Mammary epithelial cell (primary cell): ENCODE measurements at regions of chr10 and their contacts with region 1.

Region 1: GRCh38 chr10:47133871-47134570 is 166.0 kb upstream of the GDF10 start:
- DNase-seq: no peak
- H3K4me3 ChIP-seq: no peak overlapping the region
- H3K27ac ChIP-seq: no peak overlapping the region
- H3K4me1 ChIP-seq: peaks cover 16% of the 10 kb centered on the region
- H3K27me3 ChIP-seq: no peaks in the 10 kb centered on the region
- CTCF ChIP-seq: no peak

Region 2: GRCh38 chr10:47092822-47093221 is 41.2 kb before region 1 on chr10:
- CTCF ChIA-PET with region 1: no interaction called
- dilution Hi-C with region 1: loop called (anchors 5 kb)
- in situ Hi-C with region 1: no loop called
- intact Hi-C with region 1: no loop called
- DNase-seq: no peak
- H3K4me3 ChIP-seq: no peak overlapping the region
- H3K27ac ChIP-seq: no peak overlapping the region
- H3K4me1 ChIP-seq: no peaks in the 10 kb centered on the region
- H3K27me3 ChIP-seq: peaks cover 2% of the 10 kb centered on the region
- CTCF ChIP-seq: no peak

Region 3: DNA sequence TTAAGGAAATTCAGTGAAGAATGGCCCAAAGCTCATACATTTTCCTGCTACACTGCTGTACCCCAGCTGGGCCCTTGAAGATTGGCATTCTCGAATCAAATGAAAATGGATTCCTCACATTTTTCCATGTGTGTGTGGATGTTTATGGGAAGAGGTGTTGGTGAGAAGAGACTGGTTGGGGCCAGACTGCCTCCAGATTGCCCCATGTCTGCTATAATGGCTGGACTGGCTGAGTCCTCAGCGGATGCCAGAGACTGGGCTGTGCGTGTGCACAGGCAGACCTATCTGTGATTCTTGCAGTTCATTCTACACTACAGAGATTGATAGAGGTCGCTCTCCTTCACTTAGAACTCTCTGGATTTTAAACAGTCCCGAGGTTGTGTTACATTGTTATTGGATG is 17.6 kb before region 1 on chr10:
- CTCF ChIA-PET with region 1: no interaction called
- dilution Hi-C with region 1: no loop called
- in situ Hi-C with region 1: no loop called
- intact Hi-C with region 1: no loop called
- DNase-seq: no peak
- H3K4me3 ChIP-seq: no peak overlapping the region
- H3K27ac ChIP-seq: no peak overlapping the region
- H3K4me1 ChIP-seq: no peaks in the 10 kb centered on the region
- H3K27me3 ChIP-seq: peaks cover 4% of the 10 kb centered on the region
- CTCF ChIP-seq: no peak

Region 4: DNA sequence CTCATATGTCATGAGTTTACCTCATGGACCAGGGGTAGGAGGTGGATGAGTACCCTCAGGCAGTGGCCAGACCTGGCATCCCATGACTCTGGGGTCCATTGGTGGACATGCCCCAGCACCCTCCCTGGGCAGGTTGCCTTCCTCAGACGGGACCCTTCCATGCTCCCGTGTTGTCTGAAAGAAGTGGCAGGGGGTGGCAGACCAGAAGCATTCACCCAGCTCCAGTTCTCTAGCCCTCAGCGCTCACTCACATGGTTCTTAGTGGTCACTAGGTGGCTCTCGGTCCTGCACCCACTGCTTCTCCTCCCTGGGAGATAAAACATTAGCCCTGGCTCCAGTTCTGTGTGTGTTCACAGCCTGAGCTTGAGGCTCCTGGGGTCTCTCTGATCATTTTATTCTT is 220.1 kb after region 1 on chr10:
- CTCF ChIA-PET with region 1: no interaction called
- dilution Hi-C with region 1: no loop called
- in situ Hi-C with region 1: no loop called
- intact Hi-C with region 1: no loop called
- DNase-seq: no peak
- H3K4me3 ChIP-seq: no peak overlapping the region
- H3K27ac ChIP-seq: no peak overlapping the region
- H3K4me1 ChIP-seq: no peaks in the 10 kb centered on the region
- H3K27me3 ChIP-seq: no peaks in the 10 kb centered on the region
- CTCF ChIP-seq: peak in 1 of 2 donors; percentile 14